Head of caudate nucleus (tissue), 42 donors: ENCODE measurements at regions of chr19 and their contacts with region 1.

Region 1: GRCh38 chr19:20661150-20661819 is at the start of gene ZNF626:
- DNase-seq: peak; percentile 87 to 99 (median 97)

Region 2: DNA sequence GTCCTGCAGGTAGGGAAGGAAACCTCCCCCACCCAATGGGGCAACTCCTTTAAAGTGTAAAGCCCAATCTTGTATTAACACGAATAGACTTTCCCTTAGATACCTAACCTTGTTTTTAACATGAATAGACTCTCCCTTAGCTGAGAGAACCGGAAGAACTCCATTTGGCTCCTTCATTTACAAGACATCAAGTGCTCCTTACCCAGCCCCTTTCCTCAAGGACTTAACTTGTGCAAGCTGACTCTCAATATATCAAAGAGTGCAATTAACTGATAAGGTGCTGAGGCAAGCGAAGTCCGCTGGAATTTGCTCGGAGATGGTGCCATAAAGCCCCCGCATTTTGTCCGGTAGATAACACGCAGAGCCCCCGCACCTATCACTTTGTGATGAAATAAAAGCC is 593.3 kb before region 1 on chr19:
- intact Hi-C with region 1: no loop called
- DNase-seq: no peak

Region 3: GRCh38 chr19:20565321-20566018 is 95.8 kb before region 1 on chr19 and contains the start of gene ZNF737:
- intact Hi-C with region 1: loop called (anchors 5 kb)
- DNase-seq: peak; percentile 95 to 99 (median 98)

Region 4: GRCh38 chr19:20776083-20777076 is 115.1 kb after region 1 on chr19 and contains the start of gene ZNF66:
- intact Hi-C with region 1: loop called (anchors 5 kb)
- DNase-seq: peak; percentile 95 to 100 (median 98)